ENCODE measurements at regions of chr15 and their contacts with region 1.

Region 1: GRCh38 chr15:38563723-38564519 is 693 bp downstream of the RASGRP1 start:
- DNase-seq: peak; percentile 90
- ATAC-seq: peak; percentile 79
- H3K4me3 ChIP-seq: peak overlapping the region; percentile 56 to 85 (median 78)
- H3K4me3 Mint-ChIP-seq: peak overlapping the region; percentile 96
- H3K27ac ChIP-seq: peak overlapping the region; percentile 84 to 88
- H3K27ac Mint-ChIP-seq: peak overlapping the region; percentile 90
- H3K4me1 ChIP-seq: peaks cover 44 to 49% of the 10 kb centered on the region in 2 donors
- H3K4me1 Mint-ChIP-seq: peaks cover 56% of the 10 kb centered on the region
- H3K27me3 ChIP-seq: no peaks in the 10 kb centered on the region
- H3K27me3 Mint-ChIP-seq: no peaks in the 10 kb centered on the region
- CTCF ChIP-seq: peak; percentile 89

Region 2: DNA sequence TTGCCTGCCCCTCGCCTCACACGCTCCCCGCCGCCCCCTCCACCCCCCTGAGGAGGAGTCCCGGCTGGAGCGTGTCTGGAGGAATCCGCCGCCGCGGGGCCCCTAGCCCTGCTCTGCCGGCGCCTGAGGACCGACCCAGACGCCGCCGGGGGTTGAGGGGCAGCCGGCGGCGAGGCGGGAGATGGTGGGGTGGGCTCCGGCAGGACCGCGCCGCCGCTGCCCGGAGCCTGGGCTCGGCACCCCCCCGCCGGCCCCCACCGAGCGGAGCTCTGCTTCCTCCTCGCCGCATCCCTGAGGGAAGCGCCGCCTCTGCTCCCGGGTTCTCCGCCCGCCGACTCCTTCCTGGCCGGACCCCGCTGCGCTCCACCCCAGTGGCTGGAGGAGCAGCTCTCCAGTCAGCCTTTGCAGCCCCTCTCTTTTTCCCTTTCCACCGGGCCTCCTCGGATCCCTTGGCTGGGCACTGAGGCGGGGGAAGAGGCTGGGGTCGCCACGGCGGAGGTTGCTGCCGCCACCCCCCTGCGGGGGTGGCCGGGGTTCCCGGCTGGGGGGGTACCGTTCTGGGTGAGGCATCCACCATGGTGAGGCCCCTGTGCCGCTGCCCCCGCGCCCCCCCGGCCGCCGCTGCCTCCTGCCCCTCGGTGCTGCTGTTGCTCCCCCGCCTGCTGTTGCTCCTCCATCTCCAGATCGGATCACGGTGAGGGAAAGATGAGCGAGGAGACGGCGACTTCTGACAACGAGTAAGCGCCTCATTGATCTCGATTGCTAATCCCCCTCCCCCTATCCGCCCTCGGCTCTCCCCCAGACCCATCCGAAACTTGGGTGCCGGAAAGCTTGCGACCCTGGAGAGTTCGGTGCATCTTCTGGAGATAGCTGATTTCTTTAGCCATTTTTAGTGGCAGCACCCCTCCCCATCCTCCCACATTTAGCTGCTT is 311.2 kb before region 1 on chr15 and contains the start of gene SPRED1:
- CTCF ChIA-PET with region 1: no interaction called
- POLR2A ChIA-PET with region 1: no interaction called
- intact Hi-C with region 1: loop called (anchors 5 kb)
- DNase-seq: no peak
- ATAC-seq: peak; percentile 9
- H3K4me3 ChIP-seq: peak within 1 kb of the TSS; percentile 57 to 93 (median 79)
- H3K4me3 Mint-ChIP-seq: peak within 1 kb of the TSS; percentile 90
- H3K27ac ChIP-seq: peak within 1 kb of the TSS in 1 of 2 donors; percentile 19
- H3K27ac Mint-ChIP-seq: peak within 1 kb of the TSS; percentile 84
- H3K4me1 ChIP-seq: peaks cover 21 to 28% of the 10 kb centered on the region in 2 donors
- H3K4me1 Mint-ChIP-seq: peaks cover 34% of the 10 kb centered on the region
- H3K27me3 ChIP-seq: peaks cover 0 to 14% (median 4%) of the 10 kb centered on the region in 4 experiments
- H3K27me3 Mint-ChIP-seq: peaks cover 11% of the 10 kb centered on the region
- CTCF ChIP-seq: no peak
- total RNA-seq, gene SPRED1: 1.2 and 2.1 TPM in 2 replicates

Region 3: DNA sequence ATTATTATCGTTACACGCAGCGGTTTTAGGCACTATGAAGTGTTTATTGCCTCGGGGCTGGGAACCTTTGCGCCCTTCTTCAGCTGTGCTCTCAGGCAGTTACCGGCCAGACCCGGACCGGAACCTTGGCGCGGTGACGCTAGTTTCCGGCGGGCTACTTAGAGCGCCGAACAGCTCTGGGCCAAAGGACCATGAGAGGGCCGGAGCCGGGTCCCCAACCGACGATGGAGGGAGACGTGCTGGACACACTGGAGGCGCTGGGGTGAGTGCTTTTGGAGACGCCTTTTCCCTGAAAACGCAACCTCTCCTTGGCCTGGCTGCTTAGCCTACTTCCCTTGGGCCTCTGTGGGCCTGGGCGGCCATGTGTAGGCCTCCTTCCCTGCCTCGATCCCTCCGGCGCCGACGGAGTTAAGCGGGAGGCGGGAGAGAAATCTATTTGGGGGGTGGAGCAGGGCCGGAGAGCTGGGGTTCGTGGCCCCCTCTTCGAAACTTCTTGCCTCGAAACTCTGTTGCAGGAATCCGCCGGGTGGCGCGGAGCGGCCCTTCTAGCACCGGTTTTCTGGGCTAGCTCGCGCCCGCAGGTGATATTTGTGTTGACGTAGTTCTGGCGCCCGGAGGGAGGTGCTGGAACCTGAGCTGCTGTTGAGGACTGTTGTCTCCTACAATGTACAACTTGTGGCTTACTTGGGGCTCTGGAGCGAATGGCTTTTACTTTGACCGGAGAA is 109.8 kb before region 1 on chr15 and contains the start of gene FAM98B:
- CTCF ChIA-PET with region 1: interaction called, 26 read pairs
- POLR2A ChIA-PET with region 1: interaction called, 4 read pairs
- intact Hi-C with region 1: loop called (anchors 1 kb)
- DNase-seq: peak; percentile 91
- ATAC-seq: peak; percentile 86
- H3K4me3 ChIP-seq: peak within 1 kb of the TSS; percentile 69 to 94 (median 86)
- H3K4me3 Mint-ChIP-seq: peak within 1 kb of the TSS; percentile 99
- H3K27ac ChIP-seq: peak within 1 kb of the TSS; percentile 87 to 89
- H3K27ac Mint-ChIP-seq: peak within 1 kb of the TSS; percentile 97
- H3K4me1 ChIP-seq: peaks cover 9% of the 10 kb centered on the region in 2 donors
- H3K4me1 Mint-ChIP-seq: peaks cover 27% of the 10 kb centered on the region
- H3K27me3 ChIP-seq: no peaks in the 10 kb centered on the region
- H3K27me3 Mint-ChIP-seq: peaks cover 10% of the 10 kb centered on the region
- CTCF ChIP-seq: peak; percentile 12
- total RNA-seq, gene FAM98B: 16.6 and 21.5 TPM in 2 replicates

Region 4: GRCh38 chr15:38474155-38474757 is 89.7 kb before region 1 on chr15:
- CTCF ChIA-PET with region 1: interaction called, 16 read pairs
- POLR2A ChIA-PET with region 1: no interaction called
- intact Hi-C with region 1: loop called (anchors 1 kb)
- DNase-seq: peak; percentile 73
- ATAC-seq: peak; percentile 99
- H3K4me3 ChIP-seq: no peak overlapping the region
- H3K4me3 Mint-ChIP-seq: no peak overlapping the region
- H3K27ac ChIP-seq: no peak overlapping the region
- H3K27ac Mint-ChIP-seq: no peak overlapping the region
- H3K4me1 ChIP-seq: no peaks in the 10 kb centered on the region
- H3K4me1 Mint-ChIP-seq: peaks cover 2% of the 10 kb centered on the region
- H3K27me3 ChIP-seq: no peaks in the 10 kb centered on the region
- H3K27me3 Mint-ChIP-seq: no peaks in the 10 kb centered on the region
- CTCF ChIP-seq: peak; percentile 89

Region 5: DNA sequence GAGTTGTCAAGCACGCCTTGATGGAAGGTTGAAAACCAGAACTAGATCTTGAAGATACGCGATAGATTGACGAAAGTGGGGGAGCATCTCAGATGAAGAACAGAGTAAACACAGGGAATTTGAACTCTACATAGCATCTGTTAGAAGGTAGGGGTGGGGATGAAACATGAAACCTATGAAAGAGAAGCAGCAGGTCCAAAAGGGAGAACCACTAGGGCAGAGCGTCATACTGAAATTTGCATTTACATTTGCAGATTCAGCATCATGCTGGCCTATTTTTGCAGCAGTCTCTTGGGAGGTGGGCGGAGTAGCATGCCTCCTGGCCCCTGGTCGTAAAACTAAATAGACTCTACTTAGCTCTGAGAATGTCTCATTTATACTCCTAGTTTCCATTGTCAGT is 46.8 kb after region 1 on chr15:
- CTCF ChIA-PET with region 1: interaction called, 9 read pairs
- POLR2A ChIA-PET with region 1: no interaction called
- intact Hi-C with region 1: loop called (anchors 2 kb)
- DNase-seq: peak; percentile 72
- ATAC-seq: peak; percentile 95
- H3K4me3 ChIP-seq: peak overlapping the region in 1 of 5 experiments; percentile 7
- H3K4me3 Mint-ChIP-seq: peak overlapping the region; percentile 60
- H3K27ac ChIP-seq: peak overlapping the region; percentile 56 to 58
- H3K27ac Mint-ChIP-seq: peak overlapping the region; percentile 74
- H3K4me1 ChIP-seq: peaks cover 21 to 23% of the 10 kb centered on the region in 2 donors
- H3K4me1 Mint-ChIP-seq: peaks cover 38% of the 10 kb centered on the region
- H3K27me3 ChIP-seq: no peaks in the 10 kb centered on the region
- H3K27me3 Mint-ChIP-seq: no peaks in the 10 kb centered on the region
- CTCF ChIP-seq: no peak

Region 6: DNA sequence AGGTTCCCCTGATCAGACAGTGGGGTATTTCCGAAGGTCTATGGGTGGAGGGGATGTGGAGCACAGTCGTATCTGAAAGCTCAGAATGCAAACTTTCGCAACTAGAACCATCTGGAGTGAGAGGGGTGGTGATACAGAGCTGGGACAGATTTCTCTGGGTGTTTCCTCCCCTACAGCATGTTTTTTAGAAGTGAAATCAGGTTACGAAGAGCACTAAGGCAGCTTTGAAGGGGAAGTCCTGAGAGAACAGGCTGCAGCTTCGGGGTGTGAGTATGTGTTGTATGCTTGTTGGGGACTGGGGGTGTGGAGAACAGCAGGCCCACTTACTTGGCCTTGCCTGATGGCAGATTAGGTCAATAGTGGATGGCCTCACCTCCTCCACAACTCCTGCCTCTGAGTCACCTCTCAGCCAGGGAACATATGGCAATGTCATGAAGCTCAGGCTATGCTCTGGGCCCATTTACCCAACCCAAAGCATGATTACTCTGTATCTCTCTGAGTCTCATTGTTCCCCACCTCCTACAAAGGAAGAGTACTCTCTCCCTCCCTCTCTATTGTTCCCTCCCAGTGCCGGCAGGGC is 107.8 kb after region 1 on chr15:
- CTCF ChIA-PET with region 1: interaction called, 89 read pairs
- POLR2A ChIA-PET with region 1: interaction called, 5 read pairs
- intact Hi-C with region 1: loop called (anchors 1 kb)
- DNase-seq: peak; percentile 91
- ATAC-seq: peak; percentile 54
- H3K4me3 ChIP-seq: no peak overlapping the region
- H3K4me3 Mint-ChIP-seq: peak overlapping the region; percentile 59
- H3K27ac ChIP-seq: peak overlapping the region; percentile 87 to 98
- H3K27ac Mint-ChIP-seq: peak overlapping the region; percentile 91
- H3K4me1 ChIP-seq: peaks cover 54 to 58% of the 10 kb centered on the region in 2 donors
- H3K4me1 Mint-ChIP-seq: peaks cover 64% of the 10 kb centered on the region
- H3K27me3 ChIP-seq: no peaks in the 10 kb centered on the region
- H3K27me3 Mint-ChIP-seq: no peaks in the 10 kb centered on the region
- CTCF ChIP-seq: no peak

Region 7: DNA sequence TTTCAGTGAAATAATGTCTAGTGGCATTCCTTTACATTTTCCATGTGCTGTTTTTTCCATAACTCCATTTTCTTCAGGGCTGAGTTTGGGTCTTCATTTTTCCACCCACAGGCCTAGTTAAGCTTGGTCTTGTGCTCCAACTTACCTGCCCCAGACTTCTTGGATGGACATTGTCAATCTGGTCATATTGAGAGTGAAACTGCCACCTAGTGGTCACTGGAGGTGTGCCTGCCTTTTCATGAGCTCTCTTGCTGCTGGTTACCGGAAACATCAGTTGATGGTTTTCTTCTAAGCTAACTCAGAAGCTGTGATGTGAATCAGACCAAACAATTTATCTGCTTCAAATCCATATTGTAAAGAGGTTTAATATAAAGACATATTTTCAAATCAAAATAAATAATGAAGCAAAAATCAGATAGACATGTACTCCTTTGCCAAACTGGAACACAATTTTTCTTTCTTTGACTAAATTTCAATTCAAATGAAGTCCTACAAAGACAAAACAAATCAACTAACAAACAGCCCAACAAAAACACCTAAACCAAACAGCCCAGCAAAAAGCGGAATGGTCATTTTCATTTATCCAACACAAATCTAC is 135.8 kb after region 1 on chr15:
- CTCF ChIA-PET with region 1: interaction called, 546 read pairs
- POLR2A ChIA-PET with region 1: no interaction called
- intact Hi-C with region 1: no loop called
- DNase-seq: peak; percentile 77
- ATAC-seq: peak; percentile 78
- H3K4me3 ChIP-seq: no peak overlapping the region
- H3K4me3 Mint-ChIP-seq: no peak overlapping the region
- H3K27ac ChIP-seq: no peak overlapping the region
- H3K27ac Mint-ChIP-seq: no peak overlapping the region
- H3K4me1 ChIP-seq: no peaks in the 10 kb centered on the region
- H3K4me1 Mint-ChIP-seq: peaks cover 2% of the 10 kb centered on the region
- H3K27me3 ChIP-seq: no peaks in the 10 kb centered on the region
- H3K27me3 Mint-ChIP-seq: peaks cover 3% of the 10 kb centered on the region
- CTCF ChIP-seq: peak; percentile 94